OCI-LY7 (cell line): ENCODE measurements at regions of chr10 and their contacts with region 1.

Region 1: GRCh38 chr10:26860443-26861204 is at the start of gene ABI1:
- DNase-seq: peak; percentile 99
- H3K4me3 ChIP-seq: peak within 1 kb of the TSS; percentile 99
- H3K27ac ChIP-seq: peak within 1 kb of the TSS; percentile 95
- H3K4me1 ChIP-seq: peaks cover 29% of the 10 kb centered on the region
- CTCF ChIP-seq: 0 out of 2 replicates have a peak, but pooled peaks have one; percentile 23
- total RNA-seq, gene ABI1: 57.4 and 62.4 TPM in 2 replicates

Region 2: GRCh38 chr10:26725837-26726727 is 134.5 kb before region 1 on chr10:
- CTCF ChIA-PET with region 1: interaction called, 9 read pairs
- POLR2A ChIA-PET with region 1: interaction called, 10 read pairs
- intact Hi-C with region 1: loop called (anchors 1 kb)
- DNase-seq: peak; percentile 73
- H3K4me3 ChIP-seq: no peak overlapping the region
- H3K27ac ChIP-seq: no peak overlapping the region
- H3K4me1 ChIP-seq: peaks cover 3% of the 10 kb centered on the region
- CTCF ChIP-seq: peak; percentile 99

Region 3: GRCh38 chr10:26799342-26799741 is 61.3 kb before region 1 on chr10:
- CTCF ChIA-PET with region 1: no interaction called
- POLR2A ChIA-PET with region 1: interaction called, 12 read pairs
- intact Hi-C with region 1: loop called (anchors 1 kb)
- DNase-seq: peak; percentile 97
- H3K4me3 ChIP-seq: peak overlapping the region; percentile 56
- H3K27ac ChIP-seq: peak overlapping the region; percentile 100
- H3K4me1 ChIP-seq: peaks cover 85% of the 10 kb centered on the region
- CTCF ChIP-seq: no peak

Region 4: GRCh38 chr10:26839966-26840627 is 20.5 kb before region 1 on chr10:
- CTCF ChIA-PET with region 1: no interaction called
- POLR2A ChIA-PET with region 1: interaction called, 9 read pairs
- intact Hi-C with region 1: loop called (anchors 2 kb)
- DNase-seq: no peak
- H3K4me3 ChIP-seq: no peak overlapping the region
- H3K27ac ChIP-seq: no peak overlapping the region
- H3K4me1 ChIP-seq: peaks cover 25% of the 10 kb centered on the region
- CTCF ChIP-seq: no peak

Region 5: DNA sequence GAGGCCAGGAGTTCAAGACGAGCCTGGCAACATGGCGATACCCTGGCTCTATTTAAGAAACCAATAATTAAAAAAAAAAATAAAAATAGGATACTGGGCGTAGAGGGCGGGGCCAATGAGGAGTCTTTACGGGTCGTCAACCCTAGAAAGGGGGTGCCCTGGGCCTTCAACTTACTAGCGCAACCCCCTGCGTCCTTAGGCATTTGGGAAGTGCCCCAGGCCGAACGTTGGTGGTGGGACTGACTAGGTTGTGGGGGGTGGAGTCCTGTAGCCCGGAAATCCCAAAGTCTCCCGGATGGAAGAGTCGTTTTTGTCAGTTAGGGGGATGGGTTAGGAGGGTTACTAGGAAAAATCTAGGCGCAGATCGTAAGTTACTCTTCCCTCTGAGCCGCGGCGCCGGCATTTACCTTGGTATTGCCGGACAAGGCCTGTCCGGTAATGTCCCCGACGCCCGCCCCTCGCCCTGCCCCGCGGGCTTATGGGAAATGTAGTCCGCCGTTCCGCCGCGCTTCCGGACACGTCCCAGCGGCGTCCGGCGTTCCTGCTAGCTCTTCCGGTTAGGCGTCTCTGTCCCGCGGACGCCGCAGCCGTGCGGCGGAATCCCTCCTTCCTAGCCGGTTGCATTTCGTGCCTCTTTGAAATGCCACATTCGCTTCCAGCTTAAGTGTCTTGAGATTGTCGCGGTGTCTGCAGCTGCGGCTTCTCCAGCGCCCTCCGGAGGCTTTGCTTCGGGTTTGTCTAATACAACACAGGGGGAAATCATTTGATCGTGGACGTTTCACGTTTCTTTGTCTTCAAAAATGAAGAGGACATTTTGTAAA is 381.2 kb after region 1 on chr10:
- CTCF ChIA-PET with region 1: no interaction called
- POLR2A ChIA-PET with region 1: no interaction called
- intact Hi-C with region 1: loop called (anchors 1 kb)
- DNase-seq: peak; percentile 96
- H3K4me3 ChIP-seq: peak overlapping the region; percentile 93
- H3K27ac ChIP-seq: peak overlapping the region; percentile 96
- H3K4me1 ChIP-seq: peaks cover 31% of the 10 kb centered on the region
- CTCF ChIP-seq: peak; percentile 77